ENCODE measurements at regions of chr20 and their contacts with region 1.

Region 1: GRCh38 chr20:297098-297924 is at the start of gene ZCCHC3:
- DNase-seq: peak; percentile 96
- ATAC-seq: peak; percentile 96
- H3K4me3 ChIP-seq: peak within 1 kb of the TSS; percentile 69 to 93 (median 89)
- H3K27ac ChIP-seq: peak within 1 kb of the TSS; percentile 92
- H3K4me1 ChIP-seq: peaks cover 39% of the 10 kb centered on the region
- H3K27me3 ChIP-seq: peaks cover 0 to 24% of the 10 kb centered on the region in 2 experiments; a peak in 3 of 5 replicates
- CTCF ChIP-seq: peak; percentile 74
- EP300 ChIP-seq: peak; percentile 75 to 92
- POLR2A ChIP-seq: peak; percentile 82 to 86
- RAD21 ChIP-seq: peak; percentile 66
- total RNA-seq, gene ZCCHC3: 56.2 and 63.0 TPM in 2 replicates

Region 2: DNA sequence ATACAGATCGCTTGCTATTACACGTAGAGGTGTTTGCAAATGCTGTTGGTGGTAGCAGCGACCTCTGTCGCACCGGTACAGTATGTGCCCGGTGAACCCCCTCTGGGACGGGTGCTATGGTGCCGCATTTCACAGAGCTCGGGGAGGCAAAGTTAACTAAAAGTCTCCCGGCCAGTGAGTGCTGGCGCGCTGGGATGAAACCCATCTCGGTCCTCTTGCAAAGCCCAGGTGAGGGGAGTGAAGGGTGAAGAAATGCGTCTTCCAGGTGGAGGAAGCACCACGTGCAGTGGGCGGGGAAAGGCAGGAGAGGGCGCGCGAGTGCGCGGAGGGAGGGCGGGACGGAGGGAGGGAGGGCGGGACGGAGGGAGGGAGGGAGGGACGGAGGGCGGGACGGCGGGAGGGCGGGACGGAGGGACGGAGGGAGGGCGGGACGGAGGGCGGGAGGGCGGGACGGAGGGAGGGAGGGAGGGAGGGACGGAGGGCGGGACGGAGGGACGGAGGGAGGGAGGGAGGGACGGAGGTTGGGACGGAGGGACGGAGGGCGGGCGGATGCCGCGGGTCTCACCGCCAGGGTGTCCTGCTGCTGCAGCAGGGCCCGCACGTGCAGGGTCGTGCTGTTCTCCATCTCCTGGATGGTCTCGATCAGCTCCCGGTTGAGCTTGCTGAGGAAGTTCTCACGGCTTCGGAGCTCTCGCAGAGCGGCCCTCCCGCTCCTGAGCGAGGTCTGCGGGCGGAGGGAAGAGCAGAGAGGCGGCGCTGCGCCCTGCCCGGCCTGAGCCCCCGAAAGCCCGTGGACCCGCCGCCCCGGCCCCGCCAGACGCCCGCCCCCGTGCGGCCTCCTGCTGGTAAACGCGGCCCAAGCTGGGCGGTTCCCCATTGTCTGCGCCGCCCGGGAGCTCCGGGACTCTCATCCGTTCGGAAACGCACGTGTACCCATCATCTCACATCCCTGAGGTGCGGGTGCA is 18.4 kb before region 1 on chr20:
- CTCF ChIA-PET with region 1: no interaction called
- POLR2A ChIA-PET with region 1: no interaction called
- in situ Hi-C with region 1: no loop called
- intact Hi-C with region 1: no loop called
- DNase-seq: no peak
- ATAC-seq: no peak
- H3K4me3 ChIP-seq: no peak overlapping the region
- H3K27ac ChIP-seq: no peak overlapping the region
- H3K4me1 ChIP-seq: no peaks in the 10 kb centered on the region
- H3K27me3 ChIP-seq: no peaks in the 10 kb centered on the region
- CTCF ChIP-seq: no peak
- EP300 ChIP-seq: no peak
- POLR2A ChIP-seq: no peak
- RAD21 ChIP-seq: no peak

Region 3: DNA sequence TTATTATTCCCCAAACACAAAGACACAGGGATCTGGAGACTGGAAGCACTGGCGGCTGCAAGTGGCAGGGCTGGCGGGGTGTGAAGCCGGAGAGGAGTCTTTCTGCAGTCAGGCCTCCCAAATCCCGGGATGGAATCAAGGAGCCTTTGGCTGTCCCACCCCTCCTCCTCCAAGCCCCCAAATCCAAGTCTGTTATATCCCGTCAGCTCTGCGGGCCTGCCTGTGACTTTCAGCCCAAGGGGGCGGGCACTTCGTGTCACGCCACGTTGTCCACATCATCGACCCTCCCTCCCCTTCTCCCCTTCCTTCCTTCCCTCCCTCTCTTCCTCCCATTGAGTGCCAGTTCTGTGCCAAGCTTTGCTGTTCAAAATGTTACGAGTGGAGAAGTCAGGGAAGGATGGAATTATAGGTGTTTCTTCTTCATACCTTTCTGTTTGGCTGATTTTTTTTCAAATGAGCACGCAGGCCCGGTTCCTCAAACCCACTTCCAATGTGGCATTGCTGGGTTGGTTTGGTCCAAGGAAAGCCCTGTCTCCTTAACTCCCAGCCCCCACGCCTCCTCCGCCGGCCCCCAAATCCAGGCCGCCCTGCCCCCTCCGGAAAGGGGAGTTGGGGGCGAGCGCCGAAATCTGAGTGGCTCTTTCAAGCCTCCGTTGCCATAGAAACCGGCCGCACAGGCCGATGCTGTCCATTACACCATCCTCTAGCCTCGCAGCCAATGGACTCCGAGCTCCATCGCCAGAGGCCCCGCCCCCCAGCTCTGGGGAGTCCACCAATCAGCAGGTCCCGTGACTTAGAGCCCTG is 12.7 kb after region 1 on chr20:
- CTCF ChIA-PET with region 1: no interaction called
- POLR2A ChIA-PET with region 1: interaction called, 56 read pairs
- in situ Hi-C with region 1: no loop called
- intact Hi-C with region 1: no loop called
- DNase-seq: peak; percentile 96
- ATAC-seq: peak; percentile 96
- H3K4me3 ChIP-seq: peak overlapping the region; percentile 39 to 62 (median 54)
- H3K27ac ChIP-seq: peak overlapping the region; percentile 60
- H3K4me1 ChIP-seq: peaks cover 47% of the 10 kb centered on the region
- H3K27me3 ChIP-seq: no peaks in the 10 kb centered on the region; a peak in 1 of 5 replicates
- CTCF ChIP-seq: 0 out of 2 replicates have a peak, but pooled peaks have one; percentile 3
- EP300 ChIP-seq: 0 out of 4 replicates have a peak, but pooled peaks of 1 of the 2 experiments have one; percentile 7
- POLR2A ChIP-seq: peak; percentile 52 to 79
- RAD21 ChIP-seq: no peak; the same call in 1 of the 2 replicates